Tibial artery (tissue), 4 donors: ENCODE measurements at regions of chr11 and their contacts with region 1.

Region 1: DNA sequence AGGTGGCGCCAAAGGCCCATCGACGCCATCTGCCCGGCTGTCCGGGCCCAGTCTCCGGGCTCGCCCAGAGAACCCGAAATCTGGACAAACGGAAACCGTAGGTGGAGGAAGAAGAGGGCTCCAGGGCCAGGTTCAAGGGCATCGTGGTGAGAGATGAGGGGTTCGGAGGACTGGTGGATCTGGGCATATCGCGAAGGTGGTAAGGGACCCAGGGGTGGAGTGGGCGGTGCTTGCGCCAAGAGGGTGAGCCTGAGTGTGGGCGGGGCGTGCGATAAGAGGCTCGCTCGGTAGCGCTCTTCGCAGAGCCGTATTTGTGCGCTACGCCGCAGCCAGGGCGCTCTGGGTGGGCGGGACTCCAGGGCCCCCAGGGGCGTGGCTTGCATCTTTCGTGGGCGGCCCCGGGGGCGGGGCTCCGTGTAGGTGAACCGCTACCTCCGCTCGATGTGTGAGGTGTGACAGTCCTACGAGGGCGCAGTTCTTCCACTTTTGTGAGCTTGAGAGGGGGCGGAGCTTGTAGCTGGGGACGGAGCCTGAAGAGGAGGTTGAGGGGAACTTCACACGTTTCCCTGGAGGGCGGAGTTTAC is 4.8 kb downstream of the CD248 start:
- DNase-seq: peak; percentile 91 to 95
- H3K4me3 ChIP-seq: peak overlapping the region; percentile 49 to 58
- H3K27ac ChIP-seq: peak overlapping the region; percentile 45 to 67
- H3K4me1 ChIP-seq: peaks cover 0 to 30% (median 24%) of the 10 kb centered on the region in 4 donors
- H3K27me3 ChIP-seq: peaks cover 0 to 33% of the 10 kb centered on the region in 2 donors
- CTCF ChIP-seq: peak; percentile 89 to 92

Region 2: GRCh38 chr11:66242095-66242765 is 69.8 kb before region 1 on chr11:
- intact Hi-C with region 1: no loop called
- DNase-seq: no peak
- H3K4me3 ChIP-seq: no peak overlapping the region
- H3K27ac ChIP-seq: no peak overlapping the region
- H3K4me1 ChIP-seq: no peaks in the 10 kb centered on the region
- H3K27me3 ChIP-seq: no peaks in the 10 kb centered on the region
- CTCF ChIP-seq: no peak

Region 3: DNA sequence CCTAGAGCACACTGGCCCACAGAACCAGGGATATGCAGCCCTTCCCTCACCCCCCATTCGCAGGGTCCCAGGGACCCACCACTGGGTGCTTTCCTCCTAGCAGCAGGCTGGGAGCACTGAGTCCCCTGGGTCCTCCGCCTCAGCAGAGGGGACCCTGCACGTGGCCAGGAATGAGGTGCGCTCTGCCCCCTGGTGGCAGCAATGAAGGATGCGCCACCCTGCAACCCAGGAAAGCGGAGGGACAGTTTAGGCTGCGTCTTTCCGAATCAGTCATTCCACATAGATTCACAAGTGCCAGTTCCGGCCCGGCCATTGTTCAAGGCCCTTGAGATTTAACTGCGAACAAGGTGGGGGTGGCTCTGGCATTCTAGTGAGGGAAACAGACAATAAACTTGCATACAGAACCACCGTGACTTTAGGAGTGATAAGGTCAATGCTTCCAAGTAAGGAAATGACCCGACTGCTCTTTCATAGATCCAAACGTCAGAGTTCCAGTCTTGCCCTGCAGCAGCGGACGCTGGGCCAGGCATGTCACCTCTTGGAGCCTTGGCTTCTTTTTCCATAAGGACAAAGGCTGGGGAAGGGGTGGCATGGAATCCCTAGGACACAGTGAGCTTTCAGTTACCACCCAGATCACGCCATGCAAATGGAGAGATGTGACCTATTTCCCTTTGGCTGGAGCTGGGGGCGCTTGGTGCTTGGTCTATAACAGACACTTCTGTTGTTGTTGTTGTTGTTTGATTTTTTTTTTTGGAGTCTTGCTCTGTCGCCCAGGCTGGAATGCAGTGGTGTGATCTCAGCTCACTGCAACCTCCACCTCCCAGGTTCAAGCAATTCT is 16.5 kb after region 1 on chr11:
- intact Hi-C with region 1: loop called (anchors 1 kb)
- DNase-seq: peak; percentile 66 to 84
- H3K4me3 ChIP-seq: no peak overlapping the region
- H3K27ac ChIP-seq: no peak overlapping the region
- H3K4me1 ChIP-seq: peaks cover 0 to 27% (median 17%) of the 10 kb centered on the region in 4 donors
- H3K27me3 ChIP-seq: no peaks in the 10 kb centered on the region
- CTCF ChIP-seq: peak; percentile 87 to 96

Region 4: GRCh38 chr11:66344550-66345315 is 32.7 kb after region 1 on chr11 and contains the start of gene BRMS1:
- intact Hi-C with region 1: loop called (anchors 5 kb)
- DNase-seq: peak; percentile 99
- H3K4me3 ChIP-seq: peak within 1 kb of the TSS; percentile 92 to 95
- H3K27ac ChIP-seq: peak within 1 kb of the TSS; percentile 87 to 98
- H3K4me1 ChIP-seq: peaks cover 12 to 40% (median 33%) of the 10 kb centered on the region in 4 donors
- H3K27me3 ChIP-seq: no peaks in the 10 kb centered on the region
- CTCF ChIP-seq: peak; percentile 14 to 46

Region 5: DNA sequence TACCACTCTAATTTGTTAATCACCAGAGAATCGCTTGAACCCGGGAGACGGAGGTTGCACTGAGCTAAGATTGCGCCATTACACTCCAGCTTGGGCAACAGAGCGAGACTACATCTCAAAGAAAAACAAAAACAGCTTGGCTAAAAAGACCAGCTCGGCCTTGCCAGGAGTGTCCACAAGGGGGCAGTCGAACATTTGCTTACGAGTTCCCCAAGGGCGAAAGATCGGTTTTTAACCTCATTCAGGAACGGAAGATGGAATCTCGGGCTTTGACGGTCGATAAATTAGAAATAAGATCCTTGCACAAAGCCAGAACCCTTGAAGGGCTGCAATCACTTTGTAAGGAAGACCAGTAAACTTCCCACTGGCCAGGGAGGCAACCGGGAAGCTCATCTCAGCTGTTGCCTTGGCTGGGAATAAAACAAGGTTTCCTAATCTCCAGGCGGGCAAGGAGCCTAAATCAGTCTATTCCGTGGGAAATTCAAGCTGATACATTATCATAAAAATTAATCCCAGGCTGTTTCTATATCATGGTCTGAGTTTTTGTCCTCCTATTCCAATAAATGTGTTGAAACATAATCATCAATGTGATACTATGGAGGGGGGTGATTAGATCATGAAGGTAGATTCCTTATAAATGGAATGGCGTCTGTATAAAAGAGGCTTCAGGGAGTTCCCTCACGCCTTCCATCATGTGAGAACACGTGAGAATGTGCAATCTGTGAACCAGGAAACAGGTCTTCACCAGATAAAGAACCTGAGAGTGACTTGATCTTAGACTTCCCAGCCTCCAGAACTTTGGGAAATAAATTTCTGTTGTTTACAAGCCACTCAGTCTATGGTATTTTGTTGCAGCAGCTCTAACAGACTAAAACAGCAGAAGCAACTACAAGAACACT is 74.4 kb after region 1 on chr11:
- intact Hi-C with region 1: loop called (anchors 5 kb)
- DNase-seq: peak; percentile 88 to 90
- H3K4me3 ChIP-seq: peak overlapping the region in 1 of 2 donors; percentile 13
- H3K27ac ChIP-seq: no peak overlapping the region
- H3K4me1 ChIP-seq: peaks cover 0 to 9% (median 0%) of the 10 kb centered on the region in 4 donors
- H3K27me3 ChIP-seq: peaks cover 0 to 28% of the 10 kb centered on the region in 2 donors
- CTCF ChIP-seq: peak; percentile 78 to 92

Region 6: GRCh38 chr11:66421492-66422205 is 109.6 kb after region 1 on chr11:
- intact Hi-C with region 1: no loop called
- DNase-seq: peak; percentile 90 to 95
- H3K4me3 ChIP-seq: no peak overlapping the region
- H3K27ac ChIP-seq: no peak overlapping the region
- H3K4me1 ChIP-seq: peaks cover 0 to 48% (median 39%) of the 10 kb centered on the region in 4 donors
- H3K27me3 ChIP-seq: peaks cover 0 to 3% of the 10 kb centered on the region in 2 donors
- CTCF ChIP-seq: no peak